ENCODE measurements at regions of chr1 and their contacts with region 1.

Region 1: DNA sequence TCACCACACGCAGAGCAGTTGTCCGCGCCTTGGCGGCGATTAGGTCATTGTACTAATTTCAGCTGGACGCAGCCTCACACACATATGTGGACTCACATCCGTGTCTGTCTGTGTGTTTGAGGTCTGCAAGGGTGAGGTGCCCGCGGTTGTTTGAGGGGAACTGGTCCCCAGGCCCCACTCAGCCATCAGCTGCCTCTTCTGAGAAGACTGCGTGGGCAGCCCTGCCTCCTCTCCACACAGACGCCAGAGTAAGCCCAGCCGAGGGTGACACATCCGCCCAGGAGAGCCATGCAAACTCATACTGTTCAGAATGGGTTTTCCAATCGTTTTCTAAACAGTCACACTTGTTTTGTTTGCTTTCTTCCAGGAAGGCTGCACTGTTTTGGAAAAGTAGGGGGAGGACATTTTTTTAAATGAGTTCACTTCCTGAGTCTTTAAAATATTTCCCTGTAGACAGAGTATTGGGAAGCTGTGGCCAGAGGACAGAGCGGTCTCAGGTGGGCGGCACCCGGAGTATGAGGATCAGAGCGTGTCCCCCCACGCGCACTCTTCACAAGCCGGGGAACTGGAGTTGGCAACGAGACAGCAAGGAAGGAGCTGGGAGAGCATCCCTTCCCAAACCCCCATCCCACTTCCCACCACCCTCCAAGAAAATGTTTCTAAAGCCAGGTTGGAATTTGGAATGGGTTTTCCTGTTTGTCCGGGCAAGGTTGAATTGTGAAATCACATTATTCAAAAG is 53.3 kb downstream of the TOMM20 start:
- DNase-seq: peak; percentile 83 to 91
- ATAC-seq: peak; percentile 4 to 14
- H3K4me3 ChIP-seq: peak overlapping the region in 3 of 4 donors; percentile 10 to 34 (median 32)
- H3K27ac ChIP-seq: peak overlapping the region; percentile 87 to 100 (median 95)
- H3K4me1 ChIP-seq: peaks cover 77 to 82% of the 10 kb centered on the region in 2 donors
- H3K27me3 ChIP-seq: no peaks in the 10 kb centered on the region
- CTCF ChIP-seq: no peak
- POLR2A ChIP-seq: peak; percentile 80 to 85

Region 2: GRCh38 chr1:234386122-234386521 is 689.2 kb before region 1 on chr1:
- in situ Hi-C with region 1: no loop called
- intact Hi-C with region 1: no loop called
- DNase-seq: no peak
- ATAC-seq: no peak
- H3K4me3 ChIP-seq: no peak overlapping the region
- H3K27ac ChIP-seq: no peak overlapping the region
- H3K4me1 ChIP-seq: no peaks in the 10 kb centered on the region
- H3K27me3 ChIP-seq: no peaks in the 10 kb centered on the region
- CTCF ChIP-seq: no peak
- POLR2A ChIP-seq: no peak

Region 3: GRCh38 chr1:234533975-234534876 is 541.1 kb before region 1 on chr1:
- in situ Hi-C with region 1: loop called in 1 of 4 experiments (anchors 10 kb)
- intact Hi-C with region 1: loop called (anchors 1 kb)
- DNase-seq: peak; percentile 79 to 89
- ATAC-seq: no peak
- H3K4me3 ChIP-seq: no peak overlapping the region
- H3K27ac ChIP-seq: peak overlapping the region; percentile 93 to 100 (median 98)
- H3K4me1 ChIP-seq: peaks cover 98% of the 10 kb centered on the region in 2 donors
- H3K27me3 ChIP-seq: no peaks in the 10 kb centered on the region
- CTCF ChIP-seq: no peak
- POLR2A ChIP-seq: no peak

Region 4: GRCh38 chr1:234881893-234882771 is 193.2 kb before region 1 on chr1:
- in situ Hi-C with region 1: loop called in 3 of 4 experiments (anchors 5 to 10 kb)
- intact Hi-C with region 1: loop called (anchors 1 kb)
- DNase-seq: no peak
- ATAC-seq: no peak
- H3K4me3 ChIP-seq: no peak overlapping the region
- H3K27ac ChIP-seq: peak overlapping the region in 1 of 4 donors; percentile 83
- H3K4me1 ChIP-seq: peaks cover 37 to 44% of the 10 kb centered on the region in 2 donors
- H3K27me3 ChIP-seq: no peaks in the 10 kb centered on the region
- CTCF ChIP-seq: no peak
- POLR2A ChIP-seq: no peak

Region 5: DNA sequence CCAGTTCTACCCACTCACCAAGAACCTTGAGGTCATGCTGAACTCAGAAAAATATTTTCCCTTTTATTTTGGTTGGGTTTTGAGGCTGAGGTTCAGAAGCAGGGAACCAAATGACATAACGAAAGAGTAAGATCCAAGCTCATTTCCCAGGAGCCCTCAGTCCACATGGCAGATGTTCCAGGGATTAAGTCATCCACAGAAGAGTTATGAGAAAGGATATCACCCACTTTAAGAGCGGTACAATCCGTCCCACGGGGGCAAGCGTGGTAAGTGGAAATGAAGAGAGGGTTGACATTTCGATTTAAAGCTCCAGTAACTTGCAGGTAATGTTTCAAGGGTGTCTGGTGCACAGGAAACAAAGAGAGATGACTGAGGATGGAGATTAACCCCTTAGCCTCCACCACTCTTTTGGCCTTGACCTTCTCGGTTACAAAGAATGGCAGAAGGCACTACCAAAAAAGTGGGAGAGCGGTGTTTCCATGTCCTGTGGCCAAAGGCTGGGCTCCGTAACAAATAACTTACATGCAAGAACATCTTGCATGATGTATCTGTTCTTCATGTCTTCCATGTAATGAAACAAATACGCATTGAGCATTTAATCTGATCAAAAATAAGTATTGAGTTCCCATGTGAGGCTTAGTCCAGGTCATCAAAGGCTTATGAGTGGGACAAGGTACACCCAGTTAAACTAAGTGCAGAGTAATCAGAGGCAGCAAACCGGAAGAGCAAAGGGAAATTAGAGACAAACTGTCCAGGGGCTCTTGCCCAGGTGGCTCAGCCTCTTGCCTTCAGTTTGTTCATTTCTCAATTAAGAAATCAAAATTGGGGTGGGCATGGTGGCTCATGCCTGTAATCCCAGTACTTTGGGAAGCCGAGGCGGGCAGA is 188.1 kb before region 1 on chr1:
- in situ Hi-C with region 1: loop called in 3 of 4 experiments (anchors 5 to 10 kb)
- intact Hi-C with region 1: loop called (anchors 1 kb)
- DNase-seq: peak; percentile 59 to 82
- ATAC-seq: peak; percentile 48 to 57
- H3K4me3 ChIP-seq: peak overlapping the region in 3 of 4 donors; percentile 3 to 42 (median 18)
- H3K27ac ChIP-seq: peak overlapping the region; percentile 90 to 100 (median 96)
- H3K4me1 ChIP-seq: peaks cover 36 to 38% of the 10 kb centered on the region in 2 donors
- H3K27me3 ChIP-seq: no peaks in the 10 kb centered on the region
- CTCF ChIP-seq: no peak
- POLR2A ChIP-seq: peak in 1 of 2 donors; percentile 25

Region 6: DNA sequence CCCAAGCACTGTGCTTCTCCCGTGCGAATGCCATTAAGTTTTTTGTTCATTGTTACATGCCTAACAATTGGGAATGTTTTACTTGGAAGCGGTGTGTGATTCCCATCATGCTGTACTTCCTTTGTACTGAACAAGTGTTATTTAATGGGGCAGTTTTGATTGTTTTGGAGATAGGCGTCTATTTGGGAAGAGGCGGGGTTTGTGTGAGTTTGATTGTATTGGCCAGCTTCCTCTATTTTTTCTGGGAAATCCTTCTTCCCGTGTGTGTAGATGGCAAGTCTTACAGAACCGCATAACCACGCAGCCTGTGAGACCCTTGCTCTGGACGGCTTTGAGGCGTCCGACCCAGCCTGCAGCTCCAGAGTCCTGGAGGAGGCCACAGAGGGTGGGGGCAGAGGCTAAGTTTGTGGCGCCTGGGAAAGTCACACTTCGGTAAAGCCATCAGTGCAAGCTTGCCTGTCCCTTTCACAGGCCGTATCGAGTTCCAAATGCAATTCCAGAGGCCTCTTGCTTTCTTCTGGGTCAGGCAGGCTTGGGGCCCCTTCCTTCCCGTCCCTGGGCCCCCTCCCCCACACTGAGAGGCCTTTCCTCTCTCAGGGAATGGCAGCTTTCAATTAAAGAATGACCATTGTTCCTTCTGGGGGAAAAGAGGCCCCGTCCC is 157.0 kb before region 1 on chr1:
- in situ Hi-C with region 1: no loop called
- intact Hi-C with region 1: loop called (anchors 10 kb)
- DNase-seq: no peak
- ATAC-seq: peak; percentile 13 to 21
- H3K4me3 ChIP-seq: no peak overlapping the region
- H3K27ac ChIP-seq: peak overlapping the region; percentile 85 to 94 (median 91)
- H3K4me1 ChIP-seq: peaks cover 69 to 71% of the 10 kb centered on the region in 2 donors
- H3K27me3 ChIP-seq: no peaks in the 10 kb centered on the region
- CTCF ChIP-seq: no peak
- POLR2A ChIP-seq: no peak

Region 7: DNA sequence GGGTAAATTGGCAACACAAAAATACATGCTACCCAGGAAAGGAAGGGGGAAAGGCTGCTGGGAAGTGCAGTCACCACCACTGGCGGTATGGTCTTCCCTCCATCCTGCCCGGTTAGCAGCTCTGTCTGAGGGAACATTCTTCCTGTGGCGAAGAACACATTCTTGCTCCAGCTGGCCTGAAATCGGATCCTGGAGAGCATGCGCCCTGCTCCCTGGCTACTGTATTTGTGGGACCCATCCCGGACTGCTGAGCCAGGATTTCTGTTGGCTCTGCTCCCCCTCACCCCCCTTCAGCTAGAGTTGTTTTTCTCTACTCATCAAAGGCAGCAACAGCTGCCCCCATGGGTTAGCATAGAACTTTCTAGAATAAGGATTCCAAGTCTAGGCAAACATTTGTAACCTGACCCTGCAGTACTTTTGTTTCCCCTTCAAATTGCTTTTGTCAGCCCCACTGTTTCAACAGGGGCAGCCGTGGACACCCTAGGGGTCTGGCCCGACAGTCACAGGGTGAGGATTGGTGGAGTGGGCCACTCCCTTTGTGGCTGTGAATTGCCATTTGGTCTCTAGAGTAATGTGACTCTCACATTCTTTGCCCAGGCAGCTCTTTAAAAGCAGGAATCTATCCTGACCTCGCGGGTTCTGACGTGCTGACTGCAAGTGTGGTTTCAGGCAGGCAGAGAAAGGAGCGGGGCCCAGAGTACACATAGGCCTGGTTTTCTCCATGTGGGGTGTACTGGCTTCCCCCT is 104.5 kb before region 1 on chr1:
- in situ Hi-C with region 1: loop called in 1 of 4 experiments (anchors 5 kb)
- intact Hi-C with region 1: loop called (anchors 1 kb)
- DNase-seq: peak; percentile 83 to 93
- ATAC-seq: peak; percentile 84
- H3K4me3 ChIP-seq: peak overlapping the region; percentile 48 to 65 (median 55)
- H3K27ac ChIP-seq: peak overlapping the region; percentile 87 to 94 (median 90)
- H3K4me1 ChIP-seq: peaks cover 58 to 59% of the 10 kb centered on the region in 2 donors
- H3K27me3 ChIP-seq: no peaks in the 10 kb centered on the region
- CTCF ChIP-seq: no peak
- POLR2A ChIP-seq: peak; percentile 56 to 75

Region 8: GRCh38 chr1:234978397-234979295 is 96.7 kb before region 1 on chr1:
- in situ Hi-C with region 1: loop called in 2 of 4 experiments (anchors 5 to 10 kb)
- intact Hi-C with region 1: loop called (anchors 1 kb)
- DNase-seq: peak; percentile 58 to 68
- ATAC-seq: peak in 1 of 2 donors; percentile 16
- H3K4me3 ChIP-seq: no peak overlapping the region
- H3K27ac ChIP-seq: peak overlapping the region; percentile 83 to 91 (median 89)
- H3K4me1 ChIP-seq: peaks cover 46 to 68% of the 10 kb centered on the region in 2 donors
- H3K27me3 ChIP-seq: no peaks in the 10 kb centered on the region
- CTCF ChIP-seq: no peak
- POLR2A ChIP-seq: peak; percentile 7 to 23

Region 9: DNA sequence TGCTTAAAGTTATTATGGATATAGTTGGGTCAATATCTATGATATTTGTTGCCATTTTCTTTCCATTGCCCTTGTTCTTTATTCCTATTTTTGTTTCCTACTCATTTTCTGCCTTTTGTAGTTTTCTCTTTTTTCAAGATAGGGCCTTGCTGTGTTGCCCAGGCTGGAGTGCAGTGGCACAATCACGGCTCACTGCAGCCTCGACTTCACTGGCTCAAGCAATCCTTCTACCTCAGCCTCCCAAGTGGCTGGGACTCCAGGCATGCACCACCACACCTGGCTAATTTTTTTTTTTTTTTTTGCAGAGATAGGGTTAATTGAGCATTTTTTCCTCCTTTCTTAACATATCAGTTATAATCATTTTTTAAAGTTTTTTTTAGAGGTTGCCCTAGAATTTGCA is 39.4 kb before region 1 on chr1:
- in situ Hi-C with region 1: no loop called
- intact Hi-C with region 1: no loop called
- DNase-seq: no peak
- ATAC-seq: no peak
- H3K4me3 ChIP-seq: no peak overlapping the region
- H3K27ac ChIP-seq: no peak overlapping the region
- H3K4me1 ChIP-seq: no peaks in the 10 kb centered on the region
- H3K27me3 ChIP-seq: no peaks in the 10 kb centered on the region
- CTCF ChIP-seq: no peak
- POLR2A ChIP-seq: no peak

Region 10: DNA sequence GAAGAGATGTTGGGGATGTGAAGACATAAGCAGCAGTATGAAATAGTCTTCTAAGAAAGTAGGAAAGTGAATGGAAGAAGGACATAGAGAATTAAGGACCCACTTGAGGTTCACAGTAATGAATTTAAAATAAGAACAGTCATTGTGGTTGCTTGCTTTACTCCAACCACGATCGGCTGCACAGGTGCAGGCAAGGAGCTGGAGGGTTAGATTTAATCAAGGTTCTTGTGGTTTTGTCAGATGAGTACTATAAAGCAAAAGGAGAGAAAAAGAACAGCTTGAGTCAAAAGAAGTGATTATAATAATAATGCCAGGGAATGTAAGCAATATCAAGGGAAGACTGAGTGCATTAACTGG is 131.8 kb after region 1 on chr1:
- in situ Hi-C with region 1: no loop called
- intact Hi-C with region 1: no loop called
- DNase-seq: no peak
- ATAC-seq: no peak
- H3K4me3 ChIP-seq: no peak overlapping the region
- H3K27ac ChIP-seq: no peak overlapping the region
- H3K4me1 ChIP-seq: no peaks in the 10 kb centered on the region
- H3K27me3 ChIP-seq: no peaks in the 10 kb centered on the region
- CTCF ChIP-seq: no peak
- POLR2A ChIP-seq: no peak